Dendritic cell treated with granulocyte-macrophage colony-stimulating factor and Interleukin-4, amounts not matched to agents 40 ng/mL and 50 ng/mL, for 4 days (primary cell): ENCODE measurements at regions of chr2 and their contacts with region 1.

Region 1: DNA sequence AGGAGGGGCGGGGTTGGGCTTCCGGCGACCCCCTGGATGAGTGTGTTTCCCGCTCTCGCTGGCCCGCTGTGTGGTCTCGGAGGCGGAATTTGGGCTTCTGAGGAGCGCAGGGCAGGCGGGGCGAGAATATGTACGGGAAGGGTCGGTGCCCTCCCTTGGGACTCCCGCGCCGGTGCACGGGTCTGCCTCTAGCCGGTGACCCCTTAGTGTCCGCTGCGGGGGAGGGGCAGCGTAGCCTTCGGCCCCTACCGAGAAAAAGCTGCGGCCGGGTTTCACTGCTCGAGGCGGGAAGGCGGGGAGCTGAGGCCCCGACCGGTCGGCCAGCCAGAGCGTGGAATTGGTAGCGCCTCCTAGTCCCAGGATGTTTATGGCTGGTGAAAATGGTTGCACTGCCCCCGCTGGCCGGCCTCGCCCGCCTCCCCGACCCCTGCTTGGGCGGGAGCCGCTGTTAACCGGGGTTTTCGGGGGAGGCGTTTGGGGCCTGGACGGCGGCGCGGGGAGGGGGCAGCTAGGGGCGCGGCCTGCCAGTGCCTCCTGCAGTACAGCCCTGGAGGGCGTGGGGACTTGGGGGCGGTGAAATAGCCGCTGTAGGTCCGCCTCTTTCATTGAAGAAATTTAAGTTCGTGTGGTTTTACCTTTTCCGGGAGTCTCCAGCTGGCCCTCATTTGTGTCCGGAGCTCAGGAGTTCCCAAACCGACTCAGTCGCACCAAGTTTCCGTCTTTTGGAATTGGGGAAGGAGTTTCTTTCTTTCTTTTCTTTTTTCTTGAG is at the start of gene UGP2:
- H3K4me3 Mint-ChIP-seq: peak within 1 kb of the TSS; percentile 98
- H3K27ac Mint-ChIP-seq: peak within 1 kb of the TSS; percentile 100
- H3K4me1 Mint-ChIP-seq: peaks cover 40% of the 10 kb centered on the region
- H3K27me3 Mint-ChIP-seq: no peaks in the 10 kb centered on the region

Region 2: GRCh38 chr2:63588385-63589147 is 252.9 kb before region 1 on chr2 and contains the starts of genes MDH1 and WDPCP:
- intact Hi-C with region 1: loop called (anchors 2 kb)
- H3K4me3 Mint-ChIP-seq: peak within 1 kb of the TSS; percentile 99
- H3K27ac Mint-ChIP-seq: peak within 1 kb of the TSS; percentile 97
- H3K4me1 Mint-ChIP-seq: peaks cover 42% of the 10 kb centered on the region
- H3K27me3 Mint-ChIP-seq: no peaks in the 10 kb centered on the region

Region 3: DNA sequence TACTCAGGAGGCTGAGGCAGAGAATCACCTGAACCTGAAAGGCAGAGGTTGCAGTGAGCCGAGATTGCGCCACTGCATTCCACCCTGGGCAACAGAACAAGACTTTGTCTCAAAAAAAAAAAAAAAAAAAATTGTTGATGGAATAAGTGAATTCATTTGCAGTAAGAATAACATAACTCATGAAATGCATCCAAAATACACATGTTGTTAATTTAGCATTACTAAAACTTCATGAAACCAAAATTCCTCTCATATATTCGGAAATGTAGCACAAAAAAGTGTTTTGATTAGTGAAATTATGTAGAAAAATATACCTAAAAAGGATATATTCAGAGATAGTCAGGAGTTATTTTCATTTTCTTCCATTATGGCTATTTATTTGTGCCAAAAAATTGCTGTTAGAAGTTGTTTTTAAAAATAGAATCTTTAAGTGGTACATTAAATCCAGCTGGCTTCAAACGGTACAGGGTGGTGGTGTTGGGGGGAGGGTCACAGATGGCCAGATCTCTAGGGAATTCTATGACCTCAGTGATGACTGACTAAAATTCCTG is 78.0 kb before region 1 on chr2:
- intact Hi-C with region 1: no loop called
- H3K4me3 Mint-ChIP-seq: no peak overlapping the region
- H3K27ac Mint-ChIP-seq: no peak overlapping the region
- H3K4me1 Mint-ChIP-seq: no peaks in the 10 kb centered on the region
- H3K27me3 Mint-ChIP-seq: no peaks in the 10 kb centered on the region

Region 4: DNA sequence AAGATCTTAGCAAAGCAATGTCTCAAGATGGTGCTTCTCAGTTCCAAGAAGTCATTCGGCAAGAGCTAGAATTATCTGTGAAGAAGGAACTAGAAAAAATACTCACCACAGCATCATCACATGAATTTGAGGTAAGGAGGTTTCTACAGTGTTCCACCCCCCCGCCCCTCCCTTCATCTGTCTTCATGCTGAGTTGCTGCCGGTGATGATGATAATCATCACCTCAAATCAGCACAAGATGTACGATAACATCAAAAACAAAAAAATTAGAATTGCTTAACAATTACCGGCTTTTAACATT is 14.8 kb after region 1 on chr2:
- intact Hi-C with region 1: loop called (anchors 2 kb)
- H3K4me3 Mint-ChIP-seq: peak overlapping the region; percentile 42
- H3K27ac Mint-ChIP-seq: peak overlapping the region; percentile 86
- H3K4me1 Mint-ChIP-seq: peaks cover 56% of the 10 kb centered on the region
- H3K27me3 Mint-ChIP-seq: no peaks in the 10 kb centered on the region

Region 5: DNA sequence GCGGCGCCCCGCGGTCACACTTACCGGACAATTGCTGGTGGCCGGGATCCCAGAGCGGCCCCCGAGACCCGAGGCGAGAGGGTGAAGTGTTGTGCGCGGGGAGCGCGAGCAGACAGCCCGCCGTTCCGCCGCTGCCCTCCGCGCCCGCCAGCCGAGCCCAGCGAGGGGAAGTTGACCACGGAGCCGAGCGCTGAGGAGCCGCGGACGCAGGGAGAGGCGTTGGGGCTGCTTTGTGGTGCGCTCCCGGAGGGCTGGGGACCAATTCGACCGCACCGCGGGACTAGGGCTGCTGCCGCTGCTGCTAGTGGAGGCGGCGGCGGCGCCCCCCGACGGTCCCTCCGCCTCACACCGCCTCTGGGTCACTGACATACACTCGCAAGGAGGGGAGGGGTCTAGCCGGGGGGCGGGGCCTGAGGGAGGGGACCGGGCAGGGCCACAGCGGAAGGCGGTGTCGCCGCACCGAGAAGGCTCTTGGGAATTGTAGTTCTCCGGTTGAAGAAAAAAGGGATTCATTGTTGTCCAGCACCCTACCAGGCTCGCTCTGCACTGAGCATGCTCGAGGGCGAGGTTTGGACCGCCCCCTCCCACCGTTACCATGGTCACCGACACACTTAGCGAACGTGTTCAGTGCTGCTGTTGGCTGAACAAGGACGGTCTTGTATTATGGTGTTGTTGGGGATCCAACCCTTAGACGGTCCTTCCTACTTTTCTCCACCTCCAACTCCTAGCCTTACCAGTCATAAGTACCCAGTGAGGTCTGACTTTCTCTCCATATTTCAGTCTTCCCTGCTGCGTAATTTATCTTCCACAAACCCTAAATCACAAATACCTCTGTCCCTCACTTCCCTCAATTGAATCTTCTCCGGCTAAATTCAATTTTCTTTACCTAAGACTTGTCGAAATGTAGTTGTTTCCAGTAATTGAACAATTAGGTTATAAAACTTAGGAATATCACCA is 302.9 kb after region 1 on chr2 and contains the start of gene PELI1:
- intact Hi-C with region 1: loop called (anchors 5 kb)
- H3K4me3 Mint-ChIP-seq: peak within 1 kb of the TSS; percentile 87
- H3K27ac Mint-ChIP-seq: peak within 1 kb of the TSS; percentile 93
- H3K4me1 Mint-ChIP-seq: peaks cover 26% of the 10 kb centered on the region
- H3K27me3 Mint-ChIP-seq: no peaks in the 10 kb centered on the region